AG04449 (cell line): ENCODE measurements at regions of chr5 and their contacts with region 1.

Region 1: GRCh38 chr5:75320341-75320740 is 16.7 kb upstream of the HMGCR start:
- DNase-seq: no peak
- H3K4me3 ChIP-seq: no peak overlapping the region
- CTCF ChIP-seq: no peak

Region 2: GRCh38 chr5:75331095-75332090 is 11.1 kb after region 1 on chr5:
- CTCF ChIA-PET with region 1: interaction called, 12 read pairs
- POLR2A ChIA-PET with region 1: interaction called, 6 read pairs
- DNase-seq: no peak
- H3K4me3 ChIP-seq: no peak overlapping the region
- CTCF ChIP-seq: no peak